A549 (cell line): ENCODE measurements at regions of chr17 and their contacts with region 1.

Region 1: GRCh38 chr17:10618202-10618635 is 38.9 kb downstream of the MYH3 start:
- DNase-seq: peak; percentile 85 to 87
- ATAC-seq: peak; percentile 91 to 95
- H3K4me3 ChIP-seq: no peak overlapping the region
- H3K27ac ChIP-seq: peak overlapping the region; percentile 41 to 43; a peak in 3 of 6 replicates
- H3K4me1 ChIP-seq: peaks cover 17% of the 10 kb centered on the region; the same call in 1 of the 3 replicates
- CTCF ChIP-seq: peak; percentile 95
- EP300 ChIP-seq: no peak
- POLR2A ChIP-seq: no peak
- RAD21 ChIP-seq: peak; percentile 82 to 90

Region 2: DNA sequence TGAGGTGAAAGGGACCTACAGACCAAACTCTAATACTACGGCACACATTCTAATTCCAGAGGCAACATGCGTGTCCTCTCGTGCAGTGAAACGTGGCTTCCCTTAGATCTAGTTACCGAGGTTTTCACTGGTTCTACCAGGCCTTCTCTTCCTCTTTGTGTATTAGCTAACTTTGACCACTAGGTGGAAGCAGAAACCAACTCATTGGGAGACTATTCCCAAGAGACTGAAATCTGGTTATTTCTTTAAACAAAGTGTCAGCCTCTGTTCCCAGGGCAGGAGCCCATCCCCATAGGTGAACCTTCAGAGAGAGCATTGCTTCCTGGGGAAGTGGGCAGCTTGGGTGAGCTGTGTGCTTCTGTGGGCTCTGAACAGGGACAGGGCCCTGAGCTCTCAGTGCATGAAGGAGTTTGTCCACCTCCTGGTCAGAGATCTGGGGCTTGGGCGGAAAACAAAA is 693.5 kb before region 1 on chr17:
- CTCF ChIA-PET with region 1: interaction called, 24 read pairs
- POLR2A ChIA-PET with region 1: no interaction called
- DNase-seq: peak; percentile 78 to 87
- ATAC-seq: peak; percentile 76 to 86
- H3K4me3 ChIP-seq: no peak overlapping the region
- H3K27ac ChIP-seq: peak overlapping the region; percentile 47 to 82
- H3K4me1 ChIP-seq: peaks cover 38% of the 10 kb centered on the region
- CTCF ChIP-seq: peak; percentile 90
- EP300 ChIP-seq: no peak
- POLR2A ChIP-seq: no peak
- RAD21 ChIP-seq: peak; percentile 92 to 94

Region 3: GRCh38 chr17:9987779-9988574 is 630.2 kb before region 1 on chr17:
- CTCF ChIA-PET with region 1: interaction called, 17 read pairs
- POLR2A ChIA-PET with region 1: no interaction called
- DNase-seq: peak; percentile 57 to 66
- ATAC-seq: peak in 1 of 2 experiments; percentile 88; a peak in 3 of 6 replicates
- H3K4me3 ChIP-seq: no peak overlapping the region
- H3K27ac ChIP-seq: no peak overlapping the region
- H3K4me1 ChIP-seq: no peaks in the 10 kb centered on the region
- CTCF ChIP-seq: peak; percentile 82
- EP300 ChIP-seq: no peak
- POLR2A ChIP-seq: no peak
- RAD21 ChIP-seq: peak; percentile 45

Region 4: GRCh38 chr17:10327640-10328039 is 290.6 kb before region 1 on chr17:
- CTCF ChIA-PET with region 1: interaction called, 614 read pairs
- POLR2A ChIA-PET with region 1: no interaction called
- DNase-seq: peak; percentile 87 to 89
- ATAC-seq: peak; percentile 71 to 95
- H3K4me3 ChIP-seq: no peak overlapping the region
- H3K27ac ChIP-seq: no peak overlapping the region
- H3K4me1 ChIP-seq: peaks cover 4% of the 10 kb centered on the region; the same call in 1 of the 3 replicates
- CTCF ChIP-seq: peak; percentile 93
- EP300 ChIP-seq: no peak
- POLR2A ChIP-seq: no peak
- RAD21 ChIP-seq: peak; percentile 90 to 95

Region 5: DNA sequence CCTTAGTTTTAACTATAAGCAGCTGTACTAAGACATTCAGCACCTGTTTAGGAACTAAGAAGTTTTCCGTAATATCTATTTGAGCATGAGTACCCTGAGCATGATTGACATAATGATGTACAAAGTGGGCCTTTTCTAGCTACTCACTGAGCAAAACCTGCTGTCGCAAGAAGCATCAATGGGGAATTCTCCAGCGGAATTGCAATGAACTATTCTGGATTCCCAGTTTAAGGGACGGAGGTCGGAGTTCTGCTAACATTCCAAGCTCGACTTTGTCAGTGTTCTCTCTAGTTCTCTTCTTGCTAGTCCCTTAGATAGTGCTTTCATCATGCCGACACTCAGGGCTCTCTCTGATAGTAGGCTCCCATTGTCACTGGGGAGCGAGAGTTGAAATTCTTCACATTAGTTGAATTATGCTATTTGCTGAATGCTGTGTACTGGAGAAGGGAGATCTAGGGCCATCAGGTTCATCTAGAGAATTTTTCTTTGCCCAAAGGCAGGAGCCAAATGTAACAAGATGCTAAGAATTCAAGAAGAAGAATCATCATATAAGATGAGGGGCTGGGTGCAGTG is 28.6 kb before region 1 on chr17:
- CTCF ChIA-PET with region 1: interaction called, 20 read pairs
- POLR2A ChIA-PET with region 1: no interaction called
- DNase-seq: no peak
- ATAC-seq: no peak
- H3K4me3 ChIP-seq: no peak overlapping the region
- H3K27ac ChIP-seq: no peak overlapping the region
- H3K4me1 ChIP-seq: no peaks in the 10 kb centered on the region
- CTCF ChIP-seq: no peak
- EP300 ChIP-seq: no peak
- POLR2A ChIP-seq: no peak
- RAD21 ChIP-seq: no peak

Region 6: DNA sequence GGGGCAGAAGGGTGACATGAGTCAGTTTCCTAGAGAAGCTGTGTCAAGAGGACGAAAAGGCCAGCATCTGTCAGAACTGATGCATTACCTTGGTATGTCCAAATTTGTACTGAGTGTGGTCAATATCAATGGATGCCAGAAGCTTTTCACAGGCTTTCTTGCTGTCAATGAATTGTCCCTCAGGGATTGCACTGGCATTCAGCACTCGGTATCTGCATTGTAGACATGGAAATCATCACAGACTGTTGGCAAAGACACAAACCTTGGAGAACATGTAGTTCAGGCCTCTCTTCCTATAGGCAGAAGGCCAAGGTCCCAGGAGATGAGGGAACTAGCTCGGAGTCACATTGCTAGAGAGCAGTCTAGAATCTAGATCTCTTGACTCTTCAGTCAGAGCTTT is 22.3 kb after region 1 on chr17:
- CTCF ChIA-PET with region 1: interaction called, 315 read pairs
- POLR2A ChIA-PET with region 1: no interaction called
- DNase-seq: no peak
- ATAC-seq: no peak
- H3K4me3 ChIP-seq: no peak overlapping the region
- H3K27ac ChIP-seq: no peak overlapping the region
- H3K4me1 ChIP-seq: no peaks in the 10 kb centered on the region
- CTCF ChIP-seq: no peak
- EP300 ChIP-seq: no peak
- POLR2A ChIP-seq: no peak
- RAD21 ChIP-seq: no peak

Region 7: GRCh38 chr17:10661437-10661836 is 43.2 kb after region 1 on chr17:
- CTCF ChIA-PET with region 1: interaction called, 12 read pairs
- POLR2A ChIA-PET with region 1: no interaction called
- DNase-seq: no peak
- ATAC-seq: no peak
- H3K4me3 ChIP-seq: no peak overlapping the region
- H3K27ac ChIP-seq: no peak overlapping the region
- H3K4me1 ChIP-seq: no peaks in the 10 kb centered on the region
- CTCF ChIP-seq: no peak
- EP300 ChIP-seq: no peak
- POLR2A ChIP-seq: no peak
- RAD21 ChIP-seq: no peak